ENCODE measurements at regions of chr5 and their contacts with region 1.

Region 1: DNA sequence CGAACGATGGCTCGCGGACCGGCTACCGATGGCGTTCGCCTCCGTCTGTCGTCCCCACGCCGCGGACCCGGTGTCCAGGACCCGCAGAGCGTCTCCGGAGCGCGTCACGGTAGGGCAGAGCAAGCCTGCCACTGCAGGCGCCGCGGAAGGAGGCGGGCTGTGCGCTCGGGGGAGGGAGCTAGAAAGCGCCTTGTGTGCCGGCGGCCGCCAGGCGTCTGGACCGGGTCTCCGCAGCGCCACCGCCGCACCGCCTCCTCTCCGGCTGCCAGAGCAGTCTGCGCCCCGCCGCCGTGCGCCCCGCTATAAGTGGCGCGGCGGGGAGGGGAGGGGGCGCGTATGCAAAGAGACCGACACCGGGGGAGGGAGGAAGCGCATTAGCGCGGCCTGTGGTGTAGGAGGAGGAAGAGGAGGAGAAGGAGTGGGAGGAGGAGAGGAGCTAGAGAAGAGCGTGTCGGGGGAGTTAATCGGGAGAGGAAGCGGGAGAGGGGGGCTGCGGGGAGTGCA is at the start of gene ENC1:
- DNase-seq: peak; percentile 90
- H3K4me3 ChIP-seq: peak within 1 kb of the TSS; percentile 81 to 95
- H3K27ac ChIP-seq: peak within 1 kb of the TSS; percentile 91
- H3K4me1 ChIP-seq: peaks cover 2% of the 10 kb centered on the region
- H3K27me3 ChIP-seq: no peaks in the 10 kb centered on the region
- CTCF ChIP-seq: peak; percentile 36 to 74 (median 70)
- POLR2A ChIP-seq: no peak
- total RNA-seq, gene ENC1: 89.7 to 153 TPM

Region 2: DNA sequence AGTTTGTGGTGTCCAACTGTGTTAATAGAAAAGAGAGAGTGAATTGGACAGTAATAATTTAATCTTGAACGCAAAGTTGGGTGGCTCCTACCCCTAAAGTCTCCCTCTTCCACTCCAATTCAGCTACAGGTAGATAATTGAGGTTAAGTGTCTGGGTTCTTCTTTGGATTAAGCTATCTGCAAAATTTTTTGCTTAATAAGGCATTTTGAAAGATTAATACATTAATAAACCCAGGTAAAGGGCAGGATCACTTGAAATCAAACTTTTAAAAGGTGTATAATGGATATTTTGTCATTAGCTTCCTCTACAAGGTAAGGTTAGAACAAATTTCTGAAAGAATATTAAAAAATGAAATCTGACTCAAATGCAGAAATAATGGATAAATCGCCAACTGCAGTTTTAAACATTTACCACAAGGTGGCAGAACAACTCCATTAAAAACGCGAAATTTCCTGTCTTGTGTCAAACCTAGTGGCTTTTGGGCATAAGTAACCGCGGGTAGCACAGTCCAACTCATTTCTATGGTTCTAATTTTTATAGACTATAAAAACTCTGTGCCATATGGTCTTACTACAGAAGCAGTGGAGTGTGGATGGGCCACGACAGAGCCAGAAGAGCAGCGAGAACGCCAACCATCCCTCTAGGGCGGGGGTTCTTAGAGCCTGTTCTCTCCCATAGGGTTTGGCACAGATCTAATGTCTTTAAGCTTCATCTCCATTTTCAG is 738.0 kb before region 1 on chr5:
- intact Hi-C with region 1: loop called (anchors 5 kb)
- DNase-seq: peak; percentile 21
- H3K4me3 ChIP-seq: no peak overlapping the region
- H3K27ac ChIP-seq: no peak overlapping the region
- H3K4me1 ChIP-seq: no peaks in the 10 kb centered on the region
- H3K27me3 ChIP-seq: no peaks in the 10 kb centered on the region
- CTCF ChIP-seq: peak; percentile 87 to 95 (median 95)
- POLR2A ChIP-seq: no peak

Region 3: DNA sequence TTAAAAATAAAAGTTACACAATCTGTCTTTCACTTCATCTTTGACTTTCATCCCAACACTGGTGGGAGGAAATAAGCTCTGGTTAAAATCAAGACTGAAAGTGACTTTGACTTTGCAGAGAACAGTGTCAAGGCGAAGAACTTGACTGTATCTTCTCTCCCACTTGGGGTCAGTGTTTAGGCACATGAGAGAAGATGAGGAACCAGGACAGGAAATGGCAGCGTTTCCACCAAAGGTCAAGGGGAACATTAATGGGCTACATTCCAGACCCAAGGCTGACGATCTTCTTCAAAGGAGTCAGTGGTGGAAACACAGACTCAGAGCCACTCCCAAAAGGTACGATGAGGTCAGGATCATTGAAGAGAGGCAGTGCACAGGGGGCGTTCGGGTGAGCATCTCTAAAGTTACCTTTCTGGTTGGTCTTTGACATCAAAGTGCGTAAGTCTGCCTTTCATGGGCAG is 605.0 kb before region 1 on chr5:
- intact Hi-C with region 1: loop called (anchors 5 kb)
- DNase-seq: peak; percentile 52
- H3K4me3 ChIP-seq: no peak overlapping the region
- H3K27ac ChIP-seq: no peak overlapping the region
- H3K4me1 ChIP-seq: no peaks in the 10 kb centered on the region
- H3K27me3 ChIP-seq: no peaks in the 10 kb centered on the region
- CTCF ChIP-seq: peak in 2 of 3 experiments; percentile 37 to 45
- POLR2A ChIP-seq: no peak

Region 4: GRCh38 chr5:75536147-75537025 is 895.9 kb after region 1 on chr5:
- intact Hi-C with region 1: no loop called
- DNase-seq: no peak
- H3K4me3 ChIP-seq: no peak overlapping the region
- H3K27ac ChIP-seq: no peak overlapping the region
- H3K4me1 ChIP-seq: no peaks in the 10 kb centered on the region
- H3K27me3 ChIP-seq: no peaks in the 10 kb centered on the region
- CTCF ChIP-seq: no peak
- POLR2A ChIP-seq: no peak